ENCODE measurements at regions of chr6 and their contacts with region 1.

Region 1: DNA sequence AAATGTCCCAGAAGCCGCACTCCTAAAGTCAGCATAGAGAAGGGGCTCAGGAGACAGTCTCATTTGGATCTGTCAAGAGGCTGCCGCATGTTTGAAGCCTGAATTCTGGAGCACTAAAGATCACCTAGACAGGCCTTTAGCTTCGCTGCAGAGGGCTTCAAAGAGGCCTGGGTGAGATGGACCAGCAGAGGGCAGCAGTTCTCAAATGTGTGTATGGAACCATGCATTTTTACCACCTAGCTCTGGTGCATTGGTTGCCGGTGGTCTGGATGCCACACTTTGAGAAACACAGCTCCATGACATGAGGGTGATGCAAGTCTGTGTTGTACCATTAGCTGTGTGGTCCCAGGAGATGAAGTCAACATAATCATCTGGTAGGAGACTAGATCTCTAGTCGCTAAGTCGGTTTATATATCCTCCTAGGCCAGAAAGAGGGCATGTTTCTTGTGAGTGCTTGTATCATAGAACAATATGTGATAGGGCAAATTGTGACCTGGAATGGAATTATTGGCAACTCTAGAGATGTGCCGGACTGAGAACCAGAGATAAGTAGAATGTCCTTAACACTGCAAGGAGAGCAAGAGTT is 64.8 kb downstream of the KIAA0319 start:
- DNase-seq: peak; percentile 56
- H3K4me3 ChIP-seq: no peak overlapping the region
- H3K27ac ChIP-seq: no peak overlapping the region
- H3K4me1 ChIP-seq: no peaks in the 10 kb centered on the region
- H3K27me3 ChIP-seq: peaks cover 2 to 4% of the 10 kb centered on the region in 2 experiments
- CTCF ChIP-seq: peak; percentile 80 to 85
- POLR2A ChIP-seq: no peak

Region 2: GRCh38 chr6:24378473-24379097 is 202.6 kb before region 1 on chr6:
- CTCF ChIA-PET with region 1: no interaction called
- POLR2A ChIA-PET with region 1: no interaction called
- dilution Hi-C with region 1: no loop called
- intact Hi-C with region 1: no loop called
- DNase-seq: no peak
- H3K4me3 ChIP-seq: no peak overlapping the region
- H3K27ac ChIP-seq: no peak overlapping the region
- H3K4me1 ChIP-seq: no peaks in the 10 kb centered on the region
- H3K27me3 ChIP-seq: no peaks in the 10 kb centered on the region
- CTCF ChIP-seq: no peak
- POLR2A ChIP-seq: no peak

Region 3: GRCh38 chr6:24431045-24431451 is 150.1 kb before region 1 on chr6:
- CTCF ChIA-PET with region 1: interaction called, 3 read pairs
- POLR2A ChIA-PET with region 1: no interaction called
- dilution Hi-C with region 1: no loop called
- intact Hi-C with region 1: loop called (anchors 5 kb)
- DNase-seq: peak; percentile 55
- H3K4me3 ChIP-seq: no peak overlapping the region
- H3K27ac ChIP-seq: no peak overlapping the region
- H3K4me1 ChIP-seq: no peaks in the 10 kb centered on the region
- H3K27me3 ChIP-seq: no peaks in the 10 kb centered on the region
- CTCF ChIP-seq: peak; percentile 50 to 60
- POLR2A ChIP-seq: no peak

Region 4: DNA sequence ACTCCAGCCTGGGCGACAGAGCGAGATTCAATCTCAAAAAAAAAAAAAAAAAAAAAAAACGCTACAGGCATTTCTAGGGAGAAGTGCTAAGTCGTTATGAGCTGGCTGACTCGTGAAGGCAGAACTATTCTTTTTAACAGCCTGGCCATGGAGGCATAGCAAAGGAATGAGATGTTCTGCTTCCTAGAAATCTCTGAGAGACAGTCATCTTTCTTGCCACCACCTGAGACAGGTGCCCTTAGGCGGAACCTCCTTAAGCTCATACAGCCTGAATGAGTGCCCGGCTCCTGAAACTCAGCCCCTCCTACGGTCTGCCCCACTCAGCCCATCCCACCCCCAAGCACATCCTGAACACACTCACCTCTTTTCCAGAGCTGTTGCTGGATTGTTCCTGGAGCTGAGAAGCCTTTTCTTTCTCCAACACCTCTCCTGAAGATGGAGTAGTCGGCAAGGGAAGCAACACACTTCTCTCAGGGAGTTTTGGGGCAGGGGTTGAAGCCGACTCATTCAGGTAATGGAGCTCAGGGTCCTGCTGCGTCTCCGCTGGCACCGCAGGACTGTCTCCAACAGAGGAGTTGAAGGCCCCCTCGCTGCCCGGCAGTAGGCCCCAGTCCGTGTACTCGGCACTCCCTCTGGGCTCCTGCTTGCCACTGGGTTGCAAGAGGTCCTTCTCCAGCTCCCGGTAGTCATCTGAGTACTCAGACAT is 14.5 kb after region 1 on chr6:
- CTCF ChIA-PET with region 1: interaction called, 14 read pairs
- POLR2A ChIA-PET with region 1: no interaction called
- dilution Hi-C with region 1: no loop called
- intact Hi-C with region 1: no loop called
- DNase-seq: no peak
- H3K4me3 ChIP-seq: no peak overlapping the region
- H3K27ac ChIP-seq: no peak overlapping the region
- H3K4me1 ChIP-seq: no peaks in the 10 kb centered on the region
- H3K27me3 ChIP-seq: peaks cover 0 to 2% of the 10 kb centered on the region in 2 experiments
- CTCF ChIP-seq: no peak
- POLR2A ChIP-seq: no peak

Region 5: DNA sequence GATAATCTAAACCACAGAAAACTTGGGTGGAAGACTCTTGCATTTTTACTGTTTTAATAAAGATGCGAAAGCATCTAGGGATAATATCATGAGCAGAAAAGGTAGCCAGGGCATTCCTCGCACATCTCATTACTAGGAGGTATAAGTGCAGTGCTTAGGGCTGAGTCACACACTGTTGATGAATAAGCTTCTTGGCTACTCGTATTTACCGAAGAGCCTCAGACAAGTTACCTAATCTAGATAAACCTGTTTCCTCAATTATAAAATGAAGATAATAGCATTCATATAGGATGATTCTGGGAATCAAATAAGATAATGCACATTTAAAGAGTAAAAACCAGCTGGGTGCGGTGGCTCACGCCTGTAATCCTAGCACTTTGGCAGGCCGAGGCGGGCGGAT is 65.6 kb after region 1 on chr6:
- CTCF ChIA-PET with region 1: interaction called, 5 read pairs
- POLR2A ChIA-PET with region 1: no interaction called
- dilution Hi-C with region 1: no loop called
- intact Hi-C with region 1: loop called (anchors 1 kb)
- DNase-seq: no peak
- H3K4me3 ChIP-seq: no peak overlapping the region
- H3K27ac ChIP-seq: no peak overlapping the region
- H3K4me1 ChIP-seq: peaks cover 9% of the 10 kb centered on the region
- H3K27me3 ChIP-seq: peaks cover 3 to 13% of the 10 kb centered on the region in 2 experiments
- CTCF ChIP-seq: no peak
- POLR2A ChIP-seq: no peak

Region 6: GRCh38 chr6:24689964-24690363 is 108.8 kb after region 1 on chr6:
- CTCF ChIA-PET with region 1: interaction called, 124 read pairs
- POLR2A ChIA-PET with region 1: interaction called, 3 read pairs
- dilution Hi-C with region 1: no loop called
- intact Hi-C with region 1: loop called (anchors 1 kb)
- DNase-seq: no peak
- H3K4me3 ChIP-seq: no peak overlapping the region
- H3K27ac ChIP-seq: no peak overlapping the region
- H3K4me1 ChIP-seq: no peaks in the 10 kb centered on the region
- H3K27me3 ChIP-seq: no peaks in the 10 kb centered on the region
- CTCF ChIP-seq: no peak
- POLR2A ChIP-seq: no peak

Region 7: GRCh38 chr6:24766680-24767462 is 185.7 kb after region 1 on chr6:
- CTCF ChIA-PET with region 1: interaction called, 99 read pairs
- POLR2A ChIA-PET with region 1: no interaction called
- dilution Hi-C with region 1: no loop called
- intact Hi-C with region 1: loop called (anchors 1 kb)
- DNase-seq: peak; percentile 44
- H3K4me3 ChIP-seq: no peak overlapping the region
- H3K27ac ChIP-seq: no peak overlapping the region
- H3K4me1 ChIP-seq: no peaks in the 10 kb centered on the region
- H3K27me3 ChIP-seq: no peaks in the 10 kb centered on the region
- CTCF ChIP-seq: peak; percentile 17 to 31
- POLR2A ChIP-seq: no peak

Region 8: GRCh38 chr6:24848461-24848860 is 267.3 kb after region 1 on chr6:
- CTCF ChIA-PET with region 1: no interaction called
- POLR2A ChIA-PET with region 1: no interaction called
- dilution Hi-C with region 1: no loop called
- intact Hi-C with region 1: no loop called
- DNase-seq: no peak
- H3K4me3 ChIP-seq: no peak overlapping the region
- H3K27ac ChIP-seq: no peak overlapping the region
- H3K4me1 ChIP-seq: no peaks in the 10 kb centered on the region
- H3K27me3 ChIP-seq: peaks cover 0 to 4% of the 10 kb centered on the region in 2 experiments
- CTCF ChIP-seq: no peak
- POLR2A ChIP-seq: no peak